B cell (primary cell): ENCODE measurements at regions of chr1 and their contacts with region 1.

Region 1: DNA sequence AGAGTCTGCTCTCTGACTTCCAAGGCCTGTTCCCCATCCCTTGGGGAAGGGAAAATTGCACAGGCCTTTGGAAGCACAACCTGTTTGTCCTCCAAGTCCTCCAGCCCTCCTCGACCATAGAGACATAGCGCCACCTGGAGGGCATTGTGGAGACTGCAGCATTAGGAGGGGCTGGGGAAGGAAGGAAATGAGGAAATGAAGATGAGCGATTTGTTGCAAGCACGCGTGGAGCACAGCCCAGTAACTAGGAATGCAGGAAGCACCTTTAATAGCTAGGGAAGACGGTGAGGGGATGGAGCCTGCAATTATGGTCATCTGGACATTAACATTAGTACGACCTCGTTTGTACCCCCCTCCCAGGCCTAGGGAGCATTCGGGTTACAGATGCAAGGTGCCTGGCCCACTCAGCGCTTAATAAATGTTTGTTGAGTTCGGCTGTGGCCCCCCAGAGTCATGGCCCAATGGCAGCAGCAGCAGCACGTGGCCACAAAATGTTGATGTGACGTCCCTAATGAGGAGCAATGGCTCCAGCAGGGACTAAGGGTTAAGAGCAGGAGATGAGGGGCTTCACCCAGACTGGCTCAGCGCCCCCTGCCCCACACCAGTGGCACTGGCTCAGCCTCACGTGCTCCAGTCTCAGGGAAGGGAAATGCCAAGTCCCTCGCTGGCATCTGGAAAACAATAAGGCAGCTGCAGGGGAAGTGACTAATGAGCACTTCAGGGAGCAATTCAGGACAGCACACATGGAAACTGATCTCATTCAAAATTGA is 8.0 kb upstream of the CAMK2N1 start:
- DNase-seq: peak; percentile 89
- ATAC-seq: peak; percentile 95
- H3K4me3 ChIP-seq: peak overlapping the region in 3 of 5 experiments; percentile 21 to 40 (median 33)
- H3K4me3 Mint-ChIP-seq: no peak overlapping the region
- H3K27ac ChIP-seq: no peak overlapping the region
- H3K27ac Mint-ChIP-seq: no peak overlapping the region
- H3K4me1 ChIP-seq: peaks cover 9 to 13% of the 10 kb centered on the region in 2 donors
- H3K4me1 Mint-ChIP-seq: peaks cover 7% of the 10 kb centered on the region
- H3K27me3 ChIP-seq: peaks cover 0 to 6% (median 1%) of the 10 kb centered on the region in 4 experiments
- H3K27me3 Mint-ChIP-seq: peaks cover 10% of the 10 kb centered on the region
- CTCF ChIP-seq: peak; percentile 97

Region 2: DNA sequence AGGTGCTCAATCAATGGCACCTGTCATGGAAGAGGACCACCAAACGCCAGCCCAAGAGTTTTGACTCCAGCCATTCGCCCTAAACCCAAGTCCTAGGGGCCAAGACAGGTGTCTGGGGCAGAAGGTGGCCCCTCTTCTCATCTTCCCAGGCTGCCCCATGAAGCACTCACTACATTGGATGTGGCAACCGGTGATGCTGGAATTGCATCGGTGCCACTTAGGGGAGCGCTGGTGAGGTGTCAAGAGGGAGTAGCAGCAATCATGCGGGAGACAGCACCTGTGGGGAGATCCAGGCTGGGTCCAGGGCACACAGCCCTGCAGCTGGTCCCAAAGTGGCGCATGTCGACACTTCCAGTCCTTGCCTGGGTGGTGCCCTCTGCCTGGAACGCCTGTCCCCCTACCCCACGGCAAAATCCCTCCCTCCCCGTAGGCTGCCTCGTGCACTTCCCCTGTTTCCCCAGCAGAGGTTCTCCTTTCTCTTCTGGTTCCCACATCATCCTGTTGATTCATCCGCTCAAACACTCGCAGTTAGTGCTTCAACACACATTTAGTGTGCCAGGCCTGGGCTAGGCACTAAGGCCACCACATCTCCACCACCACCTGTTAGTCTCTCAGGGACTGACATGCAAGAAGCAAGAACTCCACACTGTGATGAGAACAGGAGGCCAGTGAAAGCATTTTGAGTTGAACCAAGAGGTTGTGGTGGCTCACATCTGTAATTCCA is 393.2 kb before region 1 on chr1:
- CTCF ChIA-PET with region 1: interaction called, 3 read pairs
- POLR2A ChIA-PET with region 1: no interaction called
- intact Hi-C with region 1: loop called (anchors 1 kb)
- DNase-seq: peak; percentile 74
- ATAC-seq: peak; percentile 94
- H3K4me3 ChIP-seq: no peak overlapping the region
- H3K4me3 Mint-ChIP-seq: no peak overlapping the region
- H3K27ac ChIP-seq: no peak overlapping the region
- H3K27ac Mint-ChIP-seq: no peak overlapping the region
- H3K4me1 ChIP-seq: peaks cover 5 to 8% of the 10 kb centered on the region in 2 donors
- H3K4me1 Mint-ChIP-seq: peaks cover 3% of the 10 kb centered on the region
- H3K27me3 ChIP-seq: no peaks in the 10 kb centered on the region
- H3K27me3 Mint-ChIP-seq: peaks cover 3% of the 10 kb centered on the region
- CTCF ChIP-seq: peak; percentile 80

Region 3: DNA sequence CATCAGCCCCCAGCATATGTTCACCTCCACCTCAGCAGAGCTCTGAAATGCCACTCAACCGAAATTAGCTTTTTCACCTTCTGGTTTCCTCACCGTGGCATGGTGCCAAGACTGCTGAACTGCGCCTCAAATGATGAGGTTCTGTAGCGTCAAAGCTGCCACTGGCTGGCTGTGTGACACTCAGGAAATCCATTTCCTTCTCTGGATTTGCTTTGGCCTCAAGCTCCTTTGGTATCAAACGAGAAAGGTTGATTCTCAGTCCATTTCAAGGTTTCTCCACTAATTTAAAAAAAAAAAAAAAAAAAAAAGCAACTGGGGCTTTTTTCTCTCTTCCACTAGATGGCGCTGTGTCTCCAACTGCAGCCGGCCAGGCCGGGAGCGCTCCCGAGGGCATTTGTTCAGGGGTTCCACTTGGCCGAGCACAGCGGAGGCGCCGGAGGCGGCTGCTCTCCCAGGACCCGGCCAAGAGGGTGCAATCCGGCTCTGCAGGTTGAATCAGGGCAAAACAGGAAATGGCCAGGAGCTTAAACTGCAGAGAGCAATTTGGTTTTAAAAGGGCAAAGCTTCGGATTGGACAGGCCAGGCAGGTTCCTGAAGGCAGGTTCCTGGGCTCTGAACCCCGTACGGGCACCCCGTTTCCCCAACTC is 281.2 kb before region 1 on chr1:
- CTCF ChIA-PET with region 1: interaction called, 111 read pairs
- POLR2A ChIA-PET with region 1: interaction called, 3 read pairs
- intact Hi-C with region 1: loop called (anchors 1 kb)
- DNase-seq: peak; percentile 77
- ATAC-seq: peak; percentile 90
- H3K4me3 ChIP-seq: peak overlapping the region in 4 of 5 experiments; percentile 6 to 44 (median 28)
- H3K4me3 Mint-ChIP-seq: peak overlapping the region; percentile 74
- H3K27ac ChIP-seq: no peak overlapping the region
- H3K27ac Mint-ChIP-seq: peak overlapping the region; percentile 53
- H3K4me1 ChIP-seq: peaks cover 10 to 16% of the 10 kb centered on the region in 2 donors
- H3K4me1 Mint-ChIP-seq: peaks cover 15% of the 10 kb centered on the region
- H3K27me3 ChIP-seq: peaks cover 0 to 38% (median 2%) of the 10 kb centered on the region in 4 experiments
- H3K27me3 Mint-ChIP-seq: peaks cover 14% of the 10 kb centered on the region
- CTCF ChIP-seq: peak; percentile 94

Region 4: DNA sequence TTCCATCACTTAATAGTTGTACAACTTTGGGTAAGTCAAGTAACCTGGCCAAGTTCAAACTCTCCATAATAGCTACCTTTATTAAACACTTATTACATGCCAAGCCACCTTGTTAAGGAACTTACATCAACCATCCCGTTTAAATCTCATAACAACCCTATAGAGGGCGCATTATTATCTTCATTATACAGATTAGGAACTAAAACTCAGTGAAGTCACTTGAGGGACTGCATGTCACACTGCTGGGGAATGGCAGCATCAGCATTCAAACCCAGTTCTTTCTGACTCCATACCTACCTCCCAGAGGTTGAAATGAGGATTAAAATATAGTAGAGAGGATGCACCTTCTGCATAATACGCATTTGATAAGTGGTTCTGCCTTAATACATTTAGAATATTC is 260.6 kb before region 1 on chr1:
- CTCF ChIA-PET with region 1: interaction called, 8 read pairs
- POLR2A ChIA-PET with region 1: no interaction called
- intact Hi-C with region 1: loop called (anchors 1 kb)
- DNase-seq: peak; percentile 46
- ATAC-seq: peak; percentile 43
- H3K4me3 ChIP-seq: no peak overlapping the region
- H3K4me3 Mint-ChIP-seq: no peak overlapping the region
- H3K27ac ChIP-seq: no peak overlapping the region
- H3K27ac Mint-ChIP-seq: no peak overlapping the region
- H3K4me1 ChIP-seq: no peaks in the 10 kb centered on the region
- H3K4me1 Mint-ChIP-seq: no peaks in the 10 kb centered on the region
- H3K27me3 ChIP-seq: peaks cover 0 to 12% (median 2%) of the 10 kb centered on the region in 4 experiments
- H3K27me3 Mint-ChIP-seq: peaks cover 56% of the 10 kb centered on the region
- CTCF ChIP-seq: peak; percentile 57

Region 5: DNA sequence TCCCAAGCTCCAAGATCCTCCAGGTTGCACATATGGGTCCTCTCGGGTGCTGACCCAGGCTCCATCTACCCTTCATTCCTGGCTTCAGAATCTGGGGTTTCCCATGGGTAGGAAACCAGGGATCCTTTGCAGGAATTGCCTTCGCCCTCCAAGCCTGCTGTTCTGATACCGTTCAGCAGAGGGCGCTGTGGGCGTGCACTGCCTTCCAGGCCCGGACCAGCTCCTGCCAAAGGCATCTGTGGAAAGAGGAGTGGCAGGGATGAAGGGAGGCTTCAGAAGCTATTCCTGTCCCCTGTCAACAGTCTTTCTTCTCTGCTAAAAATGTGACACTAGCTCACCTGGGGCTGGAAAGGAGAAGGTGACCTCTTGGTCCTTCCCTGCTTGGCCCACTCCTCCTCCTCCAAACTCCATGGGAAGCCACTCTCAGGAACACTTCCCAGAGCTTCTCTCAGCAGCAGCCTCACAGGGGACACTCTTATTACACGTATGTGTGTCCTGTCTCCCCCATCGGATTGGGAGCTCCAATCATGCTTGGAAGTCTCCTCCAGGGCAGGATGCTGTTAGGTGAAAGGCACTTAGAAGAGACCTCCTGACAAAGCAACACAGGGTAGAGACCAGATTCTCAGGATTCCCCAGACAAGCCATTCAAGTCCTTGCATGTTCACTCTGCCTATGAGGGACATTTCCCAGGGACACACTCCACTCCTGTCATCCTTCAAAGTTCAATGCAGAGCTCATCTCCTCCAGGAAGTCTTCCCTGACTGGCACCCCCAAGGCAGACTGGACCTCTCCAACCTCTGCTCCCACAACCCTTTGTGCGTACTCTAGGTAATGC is 132.0 kb before region 1 on chr1:
- CTCF ChIA-PET with region 1: interaction called, 36 read pairs
- POLR2A ChIA-PET with region 1: no interaction called
- intact Hi-C with region 1: loop called (anchors 5 kb)
- DNase-seq: peak; percentile 35
- ATAC-seq: no peak
- H3K4me3 ChIP-seq: no peak overlapping the region
- H3K4me3 Mint-ChIP-seq: no peak overlapping the region
- H3K27ac ChIP-seq: no peak overlapping the region
- H3K27ac Mint-ChIP-seq: no peak overlapping the region
- H3K4me1 ChIP-seq: peaks cover 0 to 4% of the 10 kb centered on the region in 2 donors
- H3K4me1 Mint-ChIP-seq: peaks cover 3% of the 10 kb centered on the region
- H3K27me3 ChIP-seq: peaks cover 0 to 58% (median 17%) of the 10 kb centered on the region in 4 experiments
- H3K27me3 Mint-ChIP-seq: peaks cover 66% of the 10 kb centered on the region
- CTCF ChIP-seq: peak; percentile 66

Region 6: GRCh38 chr1:20376880-20377494 is 117.0 kb before region 1 on chr1:
- CTCF ChIA-PET with region 1: interaction called, 20 read pairs
- POLR2A ChIA-PET with region 1: no interaction called
- intact Hi-C with region 1: loop called (anchors 1 kb)
- DNase-seq: peak; percentile 61
- ATAC-seq: peak; percentile 84
- H3K4me3 ChIP-seq: no peak overlapping the region
- H3K4me3 Mint-ChIP-seq: no peak overlapping the region
- H3K27ac ChIP-seq: no peak overlapping the region
- H3K27ac Mint-ChIP-seq: no peak overlapping the region
- H3K4me1 ChIP-seq: peaks cover 0 to 15% of the 10 kb centered on the region in 2 donors
- H3K4me1 Mint-ChIP-seq: peaks cover 23% of the 10 kb centered on the region
- H3K27me3 ChIP-seq: peaks cover 0 to under 1% (median 0%) of the 10 kb centered on the region in 4 experiments
- H3K27me3 Mint-ChIP-seq: peaks cover 33% of the 10 kb centered on the region
- CTCF ChIP-seq: peak; percentile 71

Region 7: GRCh38 chr1:20507564-20508410 is 13.8 kb after region 1 on chr1 and contains the start of gene MUL1:
- CTCF ChIA-PET with region 1: interaction called, 38 read pairs
- POLR2A ChIA-PET with region 1: no interaction called
- intact Hi-C with region 1: no loop called
- DNase-seq: peak; percentile 93
- ATAC-seq: peak; percentile 87
- H3K4me3 ChIP-seq: peak within 1 kb of the TSS; percentile 76 to 100 (median 86)
- H3K4me3 Mint-ChIP-seq: peak within 1 kb of the TSS; percentile 91
- H3K27ac ChIP-seq: peak within 1 kb of the TSS; percentile 93 to 96
- H3K27ac Mint-ChIP-seq: peak within 1 kb of the TSS; percentile 93
- H3K4me1 ChIP-seq: peaks cover 14 to 22% of the 10 kb centered on the region in 2 donors
- H3K4me1 Mint-ChIP-seq: peaks cover 22% of the 10 kb centered on the region
- H3K27me3 ChIP-seq: peaks cover 0 to 13% (median 1%) of the 10 kb centered on the region in 4 experiments
- H3K27me3 Mint-ChIP-seq: peaks cover 4% of the 10 kb centered on the region
- CTCF ChIP-seq: no peak
- total RNA-seq, gene MUL1: 23.9 and 24.6 TPM in 2 replicates

Region 8: GRCh38 chr1:20540281-20540680 is 46.3 kb after region 1 on chr1:
- CTCF ChIA-PET with region 1: no interaction called
- POLR2A ChIA-PET with region 1: no interaction called
- intact Hi-C with region 1: no loop called
- DNase-seq: no peak
- ATAC-seq: no peak
- H3K4me3 ChIP-seq: no peak overlapping the region
- H3K4me3 Mint-ChIP-seq: no peak overlapping the region
- H3K27ac ChIP-seq: no peak overlapping the region
- H3K27ac Mint-ChIP-seq: no peak overlapping the region
- H3K4me1 ChIP-seq: no peaks in the 10 kb centered on the region
- H3K4me1 Mint-ChIP-seq: no peaks in the 10 kb centered on the region
- H3K27me3 ChIP-seq: peaks cover 0 to 8% (median 1%) of the 10 kb centered on the region in 4 experiments
- H3K27me3 Mint-ChIP-seq: peaks cover 39% of the 10 kb centered on the region
- CTCF ChIP-seq: no peak

Region 9: GRCh38 chr1:20686878-20687615 is 193.0 kb after region 1 on chr1:
- CTCF ChIA-PET with region 1: no interaction called
- POLR2A ChIA-PET with region 1: no interaction called
- intact Hi-C with region 1: no loop called
- DNase-seq: no peak
- ATAC-seq: no peak
- H3K4me3 ChIP-seq: no peak overlapping the region
- H3K4me3 Mint-ChIP-seq: no peak overlapping the region
- H3K27ac ChIP-seq: no peak overlapping the region
- H3K27ac Mint-ChIP-seq: no peak overlapping the region
- H3K4me1 ChIP-seq: peaks cover 5 to 11% of the 10 kb centered on the region in 2 donors
- H3K4me1 Mint-ChIP-seq: no peaks in the 10 kb centered on the region
- H3K27me3 ChIP-seq: peaks cover 0 to 12% (median 0%) of the 10 kb centered on the region in 4 experiments
- H3K27me3 Mint-ChIP-seq: peaks cover 14% of the 10 kb centered on the region
- CTCF ChIP-seq: no peak